Heart right ventricle (tissue), 16 donors: ENCODE measurements at regions of chr16 and their contacts with region 1.

Region 1: DNA sequence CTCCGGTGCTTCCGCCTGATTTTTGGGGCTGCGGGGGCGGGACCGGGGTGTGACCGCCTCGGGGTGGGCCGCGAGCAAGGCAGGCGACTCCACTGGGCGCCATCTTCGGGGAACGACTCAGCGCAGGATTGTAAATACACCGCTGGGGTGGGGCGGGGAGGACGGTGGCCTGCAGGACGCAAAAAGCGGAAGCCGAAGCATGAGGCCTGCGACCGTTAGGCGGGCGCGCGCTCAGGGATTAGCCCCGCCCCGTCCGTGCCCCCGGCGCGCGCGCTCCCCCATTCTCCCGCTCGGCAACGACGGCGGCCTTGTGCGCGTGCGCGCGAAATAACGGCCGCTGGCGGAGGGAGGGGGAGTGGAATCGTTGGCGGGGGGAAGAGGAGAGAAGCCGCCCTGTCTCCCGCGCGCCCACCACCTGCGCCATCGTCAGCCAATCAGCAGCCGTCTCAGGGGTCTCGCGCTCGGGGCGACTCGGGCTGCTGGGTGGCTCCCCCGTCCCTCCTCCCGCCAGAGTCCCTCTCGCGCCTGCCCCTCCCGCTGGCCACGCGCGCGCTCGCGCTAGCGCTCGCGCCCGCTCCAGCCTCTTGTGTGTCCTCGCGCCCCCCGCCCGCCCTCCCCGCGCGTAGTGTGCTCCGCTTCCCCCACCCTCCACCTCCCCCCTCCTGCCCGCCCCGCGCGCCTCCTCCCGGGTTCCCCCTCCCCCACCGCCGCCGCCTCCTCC is 791 bp upstream of the MAZ start:
- DNase-seq: peak; percentile 97 to 98
- ATAC-seq: peak; percentile 83 to 94 (median 90)
- H3K4me3 ChIP-seq: peak overlapping the region; percentile 65 to 99 (median 79)
- H3K27ac ChIP-seq: peak overlapping the region; percentile 94 to 100 (median 97)
- H3K4me1 ChIP-seq: peaks cover 27 to 47% (median 44%) of the 10 kb centered on the region in 9 donors
- H3K27me3 ChIP-seq: no peaks in the 10 kb centered on the region
- CTCF ChIP-seq: peak in 1 of 9 donors; percentile 1

Region 2: DNA sequence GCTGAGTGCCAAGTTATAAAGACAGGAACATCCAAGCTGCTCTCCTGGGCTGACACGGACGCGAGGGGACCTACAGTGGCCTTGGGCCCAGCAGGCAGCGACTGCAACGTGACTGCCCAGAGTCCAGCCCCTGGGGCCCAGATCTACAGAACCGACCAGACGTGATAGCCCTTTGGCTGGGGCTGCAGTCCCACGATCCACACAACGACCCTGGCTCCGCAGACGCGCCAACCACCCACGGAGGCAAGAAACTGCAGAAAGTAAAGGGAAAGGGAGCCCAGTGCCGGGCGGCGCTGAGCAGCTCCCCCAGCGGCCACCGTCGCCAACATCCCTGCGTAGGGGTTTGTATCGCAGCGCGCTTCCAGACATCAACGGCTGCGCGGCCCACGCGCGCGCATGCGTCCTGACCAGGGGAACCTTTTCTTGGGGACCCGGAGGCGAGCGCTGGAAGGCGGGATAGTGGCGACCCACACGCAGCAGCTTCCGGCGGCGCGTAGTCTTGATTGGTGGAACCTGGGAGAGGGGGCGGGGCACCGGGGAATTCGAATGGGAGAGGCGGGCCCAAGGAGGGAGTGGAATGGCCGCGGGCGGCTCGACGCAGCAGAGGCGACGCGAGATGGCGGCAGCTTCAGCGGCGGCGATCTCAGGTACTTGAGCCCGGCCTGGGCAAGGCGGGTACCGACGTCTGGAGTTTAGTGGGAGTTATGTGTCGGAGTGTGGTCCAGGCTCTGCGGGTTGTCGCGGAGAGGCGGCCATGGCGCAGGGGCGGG is 15.2 kb before region 1 on chr16 and contains the start of gene KIF22:
- intact Hi-C with region 1: loop called in 2 of 10 experiments (anchors 1 to 2 kb)
- DNase-seq: peak; percentile 99 to 100
- ATAC-seq: peak; percentile 99 to 100 (median 99)
- H3K4me3 ChIP-seq: peak within 1 kb of the TSS; percentile 56 to 98 (median 83)
- H3K27ac ChIP-seq: peak within 1 kb of the TSS; percentile 55 to 97 (median 90)
- H3K4me1 ChIP-seq: peaks cover 10 to 31% (median 24%) of the 10 kb centered on the region in 9 donors
- H3K27me3 ChIP-seq: no peaks in the 10 kb centered on the region
- CTCF ChIP-seq: peak; percentile 40 to 89 (median 77)
- total RNA-seq, gene KIF22: 28.6 to 48.2 (median 38.6) TPM

Region 3: GRCh38 chr16:30052671-30053372 is 247.3 kb after region 1 on chr16:
- intact Hi-C with region 1: no loop called
- DNase-seq: peak; percentile 94 to 96
- ATAC-seq: peak; percentile 91 to 97 (median 96)
- H3K4me3 ChIP-seq: peak overlapping the region; percentile 37 to 87 (median 78)
- H3K27ac ChIP-seq: peak overlapping the region in 5 of 10 donors; percentile 29 to 80 (median 51)
- H3K4me1 ChIP-seq: peaks cover 4 to 24% (median 9%) of the 10 kb centered on the region in 9 donors
- H3K27me3 ChIP-seq: no peaks in the 10 kb centered on the region
- CTCF ChIP-seq: no peak